Right cardiac atrium (tissue), 5 donors: ENCODE measurements at regions of chr12 and their contacts with region 1.

Region 1: GRCh38 chr12:132162508-132163031 is 18.3 kb downstream of the NOC4L start:
- DNase-seq: peak; percentile 37 to 80 (median 63)
- ATAC-seq: peak; percentile 9 to 54
- H3K4me3 ChIP-seq: no peak overlapping the region
- H3K27ac ChIP-seq: no peak overlapping the region
- H3K4me1 ChIP-seq: no peaks in the 10 kb centered on the region
- H3K27me3 ChIP-seq: no peaks in the 10 kb centered on the region

Region 2: GRCh38 chr12:131949431-131950181 is 213.0 kb before region 1 on chr12 and contains the start of gene EP400:
- intact Hi-C with region 1: no loop called
- DNase-seq: peak; percentile 97 to 99 (median 99)
- ATAC-seq: peak; percentile 98 to 99
- H3K4me3 ChIP-seq: peak within 1 kb of the TSS; percentile 95
- H3K27ac ChIP-seq: peak within 1 kb of the TSS; percentile 72
- H3K4me1 ChIP-seq: peaks cover 4% of the 10 kb centered on the region
- H3K27me3 ChIP-seq: no peaks in the 10 kb centered on the region
- total RNA-seq, gene EP400: 15.5 to 21.6 (median 18.1) TPM

Region 3: DNA sequence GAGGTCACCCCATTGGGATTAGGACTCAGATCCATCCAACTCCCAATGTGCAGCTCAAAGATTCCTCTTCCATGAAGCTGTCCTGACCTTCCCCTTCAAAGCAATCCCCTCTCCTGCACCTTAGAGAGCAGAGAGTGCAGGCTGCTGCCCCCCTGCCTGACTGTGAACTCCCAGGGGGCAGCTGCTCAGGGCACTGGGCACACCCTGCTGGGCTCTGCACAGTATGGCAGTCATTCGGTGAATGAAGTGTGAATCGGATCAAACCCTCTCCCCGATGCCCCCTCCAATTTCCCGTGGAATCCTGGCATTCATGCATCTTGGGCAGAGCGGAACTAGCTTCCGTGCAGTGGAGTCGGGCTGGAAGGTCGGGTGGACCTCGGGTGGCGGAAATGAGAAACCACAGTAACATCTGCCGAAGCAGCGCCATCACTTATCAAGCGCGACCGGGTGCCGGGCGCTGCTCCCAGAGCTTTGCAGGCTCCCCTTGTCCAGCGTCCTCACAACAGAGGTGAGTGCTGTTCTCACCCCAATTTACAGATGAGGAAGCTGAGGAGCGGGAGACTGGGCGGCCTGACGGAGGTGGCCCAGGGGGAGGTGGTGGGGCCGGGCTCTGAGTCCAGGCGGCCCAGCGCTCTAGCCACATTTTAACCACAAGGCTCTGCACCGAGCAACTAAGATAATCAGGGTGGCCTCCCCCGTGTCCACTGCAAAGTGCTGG is 152.1 kb after region 1 on chr12:
- intact Hi-C with region 1: no loop called
- DNase-seq: peak in 1 of 3 donors; percentile 45
- ATAC-seq: no peak
- H3K4me3 ChIP-seq: no peak overlapping the region
- H3K27ac ChIP-seq: no peak overlapping the region
- H3K4me1 ChIP-seq: no peaks in the 10 kb centered on the region
- H3K27me3 ChIP-seq: no peaks in the 10 kb centered on the region

Region 4: GRCh38 chr12:132523576-132524331 is 361.2 kb after region 1 on chr12:
- intact Hi-C with region 1: loop called in 1 of 4 experiments (anchors 10 kb)
- DNase-seq: peak; percentile 71 to 89 (median 88)
- ATAC-seq: peak; percentile 57 to 63
- H3K4me3 ChIP-seq: no peak overlapping the region
- H3K27ac ChIP-seq: no peak overlapping the region
- H3K4me1 ChIP-seq: peaks cover 3% of the 10 kb centered on the region
- H3K27me3 ChIP-seq: no peaks in the 10 kb centered on the region